K562 (cell line): ENCODE measurements at regions of chr3 and their contacts with region 1.

Region 1: GRCh38 chr3:157130467-157131251 is 29.3 kb downstream of the CCNL1 start:
- DNase-seq: peak; percentile 44 to 73 (median 66)
- ATAC-seq: peak; percentile 45
- H3K4me3 ChIP-seq: no peak overlapping the region
- H3K27ac ChIP-seq: peak overlapping the region; percentile 48; the same call in 2 of the 3 replicates
- H3K4me1 ChIP-seq: peaks cover 29 to 67% of the 10 kb centered on the region in 2 experiments
- H3K27me3 ChIP-seq: no peaks in the 10 kb centered on the region
- CTCF ChIP-seq: peak; percentile 68 to 81 (median 81)
- EP300 ChIP-seq: no peak
- POLR2A ChIP-seq: no peak
- RAD21 ChIP-seq: peak; percentile 86 to 91

Region 2: DNA sequence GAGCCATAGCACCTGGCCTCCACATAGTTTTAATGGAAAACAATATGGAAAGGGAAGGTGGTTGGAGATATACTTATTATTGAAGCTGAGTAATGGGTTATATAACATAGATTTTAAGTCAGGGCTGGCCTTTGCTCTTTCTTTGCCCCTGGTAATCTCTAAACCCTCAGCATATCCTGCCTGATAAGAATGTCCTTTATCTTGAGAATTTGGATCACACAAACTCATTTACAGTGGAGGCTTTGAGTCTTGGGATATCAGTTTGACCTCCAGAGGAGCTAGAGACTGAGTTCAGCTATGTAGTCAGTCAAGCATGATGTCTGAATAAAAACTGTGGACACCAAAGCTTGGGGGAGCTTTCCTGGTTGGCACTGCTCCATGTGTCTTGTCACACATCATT is 1315.6 kb before region 1 on chr3:
- CTCF ChIA-PET with region 1: no interaction called
- POLR2A ChIA-PET with region 1: no interaction called
- in situ Hi-C with region 1: no loop called
- intact Hi-C with region 1: no loop called
- DNase-seq: peak in 1 of 4 experiments; percentile 28
- ATAC-seq: peak; percentile 50; the same call in 2 of the 3 replicates
- H3K4me3 ChIP-seq: no peak overlapping the region
- H3K27ac ChIP-seq: no peak overlapping the region
- H3K4me1 ChIP-seq: peaks cover 0 to 6% of the 10 kb centered on the region in 2 experiments; a peak in 2 of 5 replicates
- H3K27me3 ChIP-seq: no peaks in the 10 kb centered on the region
- CTCF ChIP-seq: no peak
- EP300 ChIP-seq: no peak
- POLR2A ChIP-seq: no peak
- RAD21 ChIP-seq: no peak; a peak in 1 of 4 replicates

Region 3: GRCh38 chr3:156681002-156681401 is 449.7 kb before region 1 on chr3:
- CTCF ChIA-PET with region 1: no interaction called
- POLR2A ChIA-PET with region 1: no interaction called
- in situ Hi-C with region 1: loop called (anchors 10 kb)
- intact Hi-C with region 1: no loop called
- DNase-seq: peak in 1 of 4 experiments; percentile 53
- ATAC-seq: peak; percentile 53; the same call in 2 of the 3 replicates
- H3K4me3 ChIP-seq: no peak overlapping the region
- H3K27ac ChIP-seq: no peak overlapping the region
- H3K4me1 ChIP-seq: peaks cover 6 to 53% of the 10 kb centered on the region in 2 experiments; a peak in 3 of 5 replicates
- H3K27me3 ChIP-seq: no peaks in the 10 kb centered on the region
- CTCF ChIP-seq: no peak
- EP300 ChIP-seq: no peak
- POLR2A ChIP-seq: no peak
- RAD21 ChIP-seq: peak in 1 of 2 experiments; percentile 11; a peak in 1 of 4 replicates

Region 4: GRCh38 chr3:156957715-156958114 is 172.9 kb before region 1 on chr3:
- CTCF ChIA-PET with region 1: no interaction called
- POLR2A ChIA-PET with region 1: no interaction called
- in situ Hi-C with region 1: no loop called
- intact Hi-C with region 1: loop called (anchors 10 kb)
- DNase-seq: no peak
- ATAC-seq: no peak
- H3K4me3 ChIP-seq: no peak overlapping the region
- H3K27ac ChIP-seq: no peak overlapping the region
- H3K4me1 ChIP-seq: no peaks in the 10 kb centered on the region
- H3K27me3 ChIP-seq: no peaks in the 10 kb centered on the region
- CTCF ChIP-seq: no peak
- EP300 ChIP-seq: no peak
- POLR2A ChIP-seq: no peak
- RAD21 ChIP-seq: no peak

Region 5: GRCh38 chr3:157081681-157082210 is 48.9 kb before region 1 on chr3:
- CTCF ChIA-PET with region 1: interaction called, 3 read pairs
- POLR2A ChIA-PET with region 1: interaction called, 3 read pairs
- in situ Hi-C with region 1: no loop called
- intact Hi-C with region 1: loop called (anchors 1 kb)
- DNase-seq: peak; percentile 80 to 87 (median 86)
- ATAC-seq: peak; percentile 95
- H3K4me3 ChIP-seq: no peak overlapping the region
- H3K27ac ChIP-seq: no peak overlapping the region
- H3K4me1 ChIP-seq: peaks cover 11 to 13% of the 10 kb centered on the region in 2 experiments; a peak in 4 of 5 replicates
- H3K27me3 ChIP-seq: no peaks in the 10 kb centered on the region
- CTCF ChIP-seq: peak; percentile 86 to 96 (median 91)
- EP300 ChIP-seq: no peak
- POLR2A ChIP-seq: no peak
- RAD21 ChIP-seq: peak; percentile 96 to 97

Region 6: GRCh38 chr3:157104928-157105652 is 25.6 kb before region 1 on chr3:
- CTCF ChIA-PET with region 1: no interaction called
- POLR2A ChIA-PET with region 1: interaction called, 3 read pairs
- in situ Hi-C with region 1: no loop called
- intact Hi-C with region 1: loop called (anchors 2 kb)
- DNase-seq: peak in 3 of 4 experiments; percentile 34 to 46 (median 40)
- ATAC-seq: peak; percentile 17
- H3K4me3 ChIP-seq: no peak overlapping the region
- H3K27ac ChIP-seq: no peak overlapping the region
- H3K4me1 ChIP-seq: peaks cover 24 to 67% of the 10 kb centered on the region in 2 experiments; a peak in 4 of 5 replicates
- H3K27me3 ChIP-seq: no peaks in the 10 kb centered on the region
- CTCF ChIP-seq: no peak
- EP300 ChIP-seq: no peak
- POLR2A ChIP-seq: no peak
- RAD21 ChIP-seq: no peak